ENCODE measurements at regions of chr22 and their contacts with region 1.

Region 1: DNA sequence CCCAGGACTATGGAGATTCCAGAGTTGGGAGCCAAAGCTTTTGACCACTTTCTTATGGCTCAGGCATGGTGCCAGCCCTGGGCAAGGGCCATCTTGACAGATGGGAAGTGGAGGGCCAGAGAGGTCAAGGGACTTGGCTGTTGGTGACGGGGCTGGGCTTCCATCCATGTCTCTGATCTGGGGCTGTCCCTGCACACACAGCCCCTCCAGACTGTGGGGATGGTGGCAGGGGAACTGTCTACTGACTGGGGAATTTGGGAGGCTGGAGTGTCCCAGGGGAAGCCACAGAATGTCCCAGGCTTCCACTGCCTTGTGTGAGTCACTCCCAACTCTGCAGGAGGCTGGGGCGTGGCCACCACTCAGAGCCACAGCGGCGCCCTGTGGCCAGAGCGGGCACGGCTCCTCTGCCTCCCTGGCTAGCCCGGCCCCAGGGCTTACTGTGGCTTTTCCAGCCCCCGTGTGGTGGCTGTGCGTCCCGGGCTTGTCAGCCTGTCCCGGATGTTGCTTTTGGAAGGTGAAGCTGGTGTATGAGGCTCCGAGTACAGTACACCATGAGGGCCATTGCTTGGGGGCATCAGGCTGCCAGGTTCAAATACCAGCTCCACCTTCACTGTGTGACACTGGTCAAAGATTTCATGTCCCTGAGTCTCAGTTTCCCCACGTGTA is 19.6 kb downstream of the C22orf23 start:
- DNase-seq: peak; percentile 92
- H3K4me3 Mint-ChIP-seq: no peak overlapping the region
- H3K27ac Mint-ChIP-seq: peak overlapping the region; percentile 11
- H3K4me1 Mint-ChIP-seq: peaks cover 17% of the 10 kb centered on the region
- H3K27me3 Mint-ChIP-seq: no peaks in the 10 kb centered on the region

Region 2: DNA sequence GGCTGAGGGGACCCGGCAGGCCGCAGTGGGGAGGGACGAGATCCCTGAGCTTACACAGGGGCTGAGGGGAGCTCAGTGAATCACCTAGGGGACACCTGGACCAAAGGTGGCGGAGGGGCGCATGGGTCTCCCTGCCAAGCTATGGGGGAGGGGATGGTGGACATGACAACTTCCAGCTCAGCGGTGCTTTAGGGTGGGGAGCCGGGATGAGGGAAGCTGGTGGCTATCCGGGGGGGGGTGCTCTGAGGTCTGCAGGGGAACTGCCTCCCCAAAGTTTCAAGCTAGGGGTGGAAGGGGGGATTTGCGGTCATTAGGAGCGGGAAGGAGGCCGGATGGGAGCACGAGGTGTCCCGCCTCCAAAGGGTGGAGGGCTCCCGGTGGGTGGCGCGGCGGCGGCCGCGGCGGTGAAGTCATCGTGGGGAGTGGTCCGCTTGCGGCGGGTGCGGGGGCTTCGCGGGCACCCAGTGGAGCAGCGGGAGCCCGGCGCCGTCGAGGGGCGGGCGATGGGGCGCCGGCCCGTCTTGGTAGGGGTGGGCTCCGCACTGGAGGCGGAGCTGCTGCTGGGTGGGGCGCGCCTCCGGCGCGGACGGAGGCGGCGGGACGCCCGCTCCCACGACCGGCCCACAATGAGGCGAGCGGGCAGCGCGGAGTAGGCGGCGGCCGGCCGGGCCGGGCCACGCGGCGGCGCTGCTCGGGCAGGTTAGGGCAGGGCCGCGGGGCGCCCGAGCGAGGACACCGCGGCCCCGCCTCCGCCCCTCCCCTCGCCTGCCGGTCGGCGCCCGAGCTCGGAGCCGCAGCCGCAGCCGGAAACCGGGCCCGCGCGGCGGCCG is 28.1 kb before region 1 on chr22 and contains the start of gene MICALL1:
- CTCF ChIA-PET with region 1: interaction called, 18 read pairs
- DNase-seq: peak; percentile 77
- H3K4me3 Mint-ChIP-seq: peak within 1 kb of the TSS; percentile 80
- H3K27ac Mint-ChIP-seq: peak within 1 kb of the TSS; percentile 82
- H3K4me1 Mint-ChIP-seq: peaks cover 40% of the 10 kb centered on the region
- H3K27me3 Mint-ChIP-seq: no peaks in the 10 kb centered on the region

Region 3: GRCh38 chr22:38062791-38063190 is 128.9 kb after region 1 on chr22:
- CTCF ChIA-PET with region 1: no interaction called
- DNase-seq: no peak
- H3K4me3 Mint-ChIP-seq: no peak overlapping the region
- H3K27ac Mint-ChIP-seq: peak overlapping the region; percentile 6
- H3K4me1 Mint-ChIP-seq: peaks cover 6% of the 10 kb centered on the region
- H3K27me3 Mint-ChIP-seq: no peaks in the 10 kb centered on the region

Measured in activated naive CD4-positive, alpha-beta T cell treated with anti-CD3 and anti-CD28 coated beads, Interleukin-2, amount 10 ng/mL, durations not matched to agents 7 days and 5 days (primary cell).